ENCODE measurements at regions of chr13 and their contacts with region 1.

Region 1: DNA sequence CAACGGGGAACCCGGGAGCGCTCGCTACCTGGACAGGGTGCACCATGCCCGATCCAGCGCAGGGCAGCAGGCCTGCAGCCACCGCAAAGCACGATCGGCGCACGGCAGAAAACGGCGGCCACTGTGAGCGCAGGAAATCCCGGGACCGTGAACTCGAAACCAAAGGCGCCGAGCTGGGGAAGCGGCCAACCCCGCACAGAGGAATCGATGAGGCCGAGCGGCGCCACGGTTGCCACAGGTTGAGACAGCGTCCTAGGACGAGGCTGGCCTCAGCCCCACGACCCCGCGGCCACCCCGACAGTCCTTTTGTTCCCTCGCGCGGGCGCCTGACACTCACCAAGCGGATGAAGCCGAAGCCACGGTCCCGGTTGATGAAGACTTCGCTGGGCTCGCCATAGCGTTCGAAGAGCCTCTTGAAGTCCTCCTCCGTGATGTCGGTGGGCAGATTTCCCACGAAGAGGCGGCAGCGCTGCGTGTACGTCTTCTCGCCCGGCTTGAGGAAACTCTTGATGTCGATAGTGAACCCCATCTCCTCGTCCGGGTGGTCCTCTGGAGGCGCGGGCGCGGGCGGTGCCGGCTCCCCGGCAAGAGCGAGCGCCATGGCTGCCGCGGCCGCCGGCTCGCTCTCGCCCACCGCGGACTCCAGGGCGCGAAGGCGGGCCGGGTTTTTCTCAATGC is 557 bp downstream of the PSPC1 start:
- DNase-seq: peak; percentile 92
- H3K4me3 ChIP-seq: peak overlapping the region; percentile 87 to 98 (median 93)
- H3K27ac ChIP-seq: peak overlapping the region; percentile 93 to 98 (median 96)
- H3K4me1 ChIP-seq: peaks cover 6 to 16% (median 13%) of the 10 kb centered on the region in 4 donors
- H3K27me3 ChIP-seq: no peaks in the 10 kb centered on the region
- CTCF ChIP-seq: no peak
- EP300 ChIP-seq: no peak
- POLR2A ChIP-seq: no peak

Region 2: DNA sequence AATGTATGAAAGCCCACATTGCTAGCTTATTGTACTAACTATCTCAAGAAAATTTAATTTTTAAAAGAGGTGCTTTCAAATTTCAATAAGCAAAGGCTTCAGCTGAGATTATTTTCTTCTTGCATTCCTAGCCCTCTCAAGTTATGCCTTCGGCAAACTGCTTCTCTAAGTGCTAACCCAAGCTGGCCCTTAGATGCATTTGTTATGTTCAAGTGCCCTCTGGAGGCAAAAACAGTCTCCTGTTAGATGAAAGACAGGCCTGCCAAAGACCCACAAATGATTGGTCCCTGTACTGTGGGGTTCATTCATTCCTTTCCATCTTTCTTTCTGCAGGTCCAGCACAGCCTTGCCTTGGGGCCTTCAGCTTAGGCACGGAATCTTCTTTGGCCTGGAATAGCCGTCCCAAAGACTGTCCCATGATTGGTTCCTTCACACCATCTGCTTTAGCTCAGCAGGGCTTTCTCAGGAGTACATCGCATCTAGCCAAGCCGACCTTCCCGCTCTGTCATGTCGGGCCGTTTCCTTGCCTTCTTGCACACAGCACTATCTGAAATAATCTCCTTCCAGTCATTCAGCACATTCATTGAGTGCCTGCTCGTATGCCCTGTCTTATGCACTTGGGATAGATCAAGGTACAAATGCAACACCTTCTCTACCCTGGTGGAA is 194.4 kb before region 1 on chr13:
- intact Hi-C with region 1: no loop called
- DNase-seq: no peak
- H3K4me3 ChIP-seq: no peak overlapping the region
- H3K27ac ChIP-seq: no peak overlapping the region
- H3K4me1 ChIP-seq: no peaks in the 10 kb centered on the region
- H3K27me3 ChIP-seq: peaks cover 0 to 16% (median 0%) of the 10 kb centered on the region in 4 donors
- CTCF ChIP-seq: peak in 1 of 3 experiments; percentile 39
- EP300 ChIP-seq: no peak
- POLR2A ChIP-seq: no peak

Region 3: DNA sequence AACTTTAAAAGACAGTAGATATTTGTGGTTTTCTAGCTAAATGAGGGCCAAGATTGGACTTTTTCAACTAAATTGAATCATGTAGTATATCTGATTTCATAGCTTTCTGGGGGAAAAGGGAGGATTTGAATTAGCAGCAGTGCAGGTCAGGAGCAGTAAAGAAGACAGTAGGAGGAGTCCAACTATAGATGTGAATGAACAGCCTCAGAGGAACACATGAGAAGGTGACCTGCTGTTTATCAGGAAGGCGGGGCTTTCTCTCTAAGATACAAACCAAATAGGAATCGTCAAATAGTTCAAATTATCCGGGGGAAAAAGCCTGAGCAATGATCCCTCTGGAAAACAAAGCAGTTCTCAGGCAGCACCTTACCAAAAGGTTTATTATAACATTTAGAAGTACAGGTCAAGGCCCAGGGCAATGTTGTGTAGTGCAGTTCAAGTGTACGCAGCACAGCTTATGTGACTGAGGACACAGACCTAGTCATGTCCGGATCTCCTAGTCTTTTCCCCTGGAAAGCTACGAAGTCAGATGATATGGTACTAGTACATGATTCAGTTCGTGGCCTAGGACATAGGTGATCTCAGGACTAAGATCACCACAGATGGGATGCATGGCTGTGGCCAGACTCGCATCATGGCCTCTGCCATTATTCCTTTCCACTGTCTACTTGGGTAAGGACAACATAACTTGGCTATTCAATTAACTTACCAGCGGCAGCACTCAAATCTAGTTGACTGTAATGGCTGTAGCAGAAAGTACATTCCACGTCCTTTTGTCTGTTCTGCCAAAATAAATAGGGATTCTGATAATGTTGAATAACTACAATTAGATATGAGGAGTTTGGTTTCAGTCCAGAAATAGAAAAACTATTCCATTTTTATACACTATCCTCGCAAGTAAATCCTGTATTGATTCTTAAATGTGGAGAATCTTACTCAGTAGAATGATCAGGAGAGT is 108.4 kb before region 1 on chr13:
- intact Hi-C with region 1: loop called (anchors 10 kb)
- DNase-seq: no peak
- H3K4me3 ChIP-seq: no peak overlapping the region
- H3K27ac ChIP-seq: no peak overlapping the region
- H3K4me1 ChIP-seq: no peaks in the 10 kb centered on the region
- H3K27me3 ChIP-seq: no peaks in the 10 kb centered on the region
- CTCF ChIP-seq: no peak
- EP300 ChIP-seq: no peak
- POLR2A ChIP-seq: no peak

Region 4: DNA sequence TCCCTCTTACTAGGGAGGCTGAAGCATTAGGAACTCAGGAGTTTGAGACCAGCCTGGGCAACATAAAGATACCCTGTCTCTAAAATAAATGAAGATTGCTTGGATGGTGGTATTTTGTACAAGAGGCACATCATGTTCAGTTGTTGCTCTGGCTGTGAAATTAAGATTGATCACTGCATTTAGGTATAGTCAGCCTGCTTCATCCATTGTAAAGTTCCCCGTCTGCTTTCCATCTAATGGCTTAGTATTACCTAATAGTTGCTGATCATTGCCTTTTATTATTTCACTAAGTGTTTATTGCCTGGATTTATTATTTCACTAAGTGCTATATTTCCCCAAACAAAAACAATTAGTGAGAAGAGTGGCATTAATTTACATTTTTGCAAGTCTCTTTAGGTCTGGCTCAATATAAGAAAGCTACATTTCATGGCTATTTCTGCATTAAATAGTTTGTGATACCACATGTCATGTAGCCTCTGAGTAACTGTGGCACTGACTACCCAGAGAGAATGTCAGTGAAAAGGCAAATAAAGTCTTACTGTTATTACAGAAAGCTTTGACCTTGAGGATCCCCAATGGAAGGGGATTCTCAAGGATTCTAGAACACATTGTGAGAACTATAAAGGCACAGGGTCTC is 126.3 kb after region 1 on chr13:
- intact Hi-C with region 1: no loop called
- DNase-seq: no peak
- H3K4me3 ChIP-seq: no peak overlapping the region
- H3K27ac ChIP-seq: no peak overlapping the region
- H3K4me1 ChIP-seq: no peaks in the 10 kb centered on the region
- H3K27me3 ChIP-seq: no peaks in the 10 kb centered on the region
- CTCF ChIP-seq: no peak
- EP300 ChIP-seq: no peak
- POLR2A ChIP-seq: no peak

Region 5: GRCh38 chr13:19984430-19985218 is 202.4 kb after region 1 on chr13:
- intact Hi-C with region 1: no loop called
- DNase-seq: no peak
- H3K4me3 ChIP-seq: no peak overlapping the region
- H3K27ac ChIP-seq: no peak overlapping the region
- H3K4me1 ChIP-seq: peaks cover 16 to 41% (median 22%) of the 10 kb centered on the region in 4 donors
- H3K27me3 ChIP-seq: no peaks in the 10 kb centered on the region
- CTCF ChIP-seq: peak; percentile 38 to 66 (median 56)
- EP300 ChIP-seq: no peak
- POLR2A ChIP-seq: no peak